ENCODE measurements at regions of chr3 and their contacts with region 1.

Region 1: DNA sequence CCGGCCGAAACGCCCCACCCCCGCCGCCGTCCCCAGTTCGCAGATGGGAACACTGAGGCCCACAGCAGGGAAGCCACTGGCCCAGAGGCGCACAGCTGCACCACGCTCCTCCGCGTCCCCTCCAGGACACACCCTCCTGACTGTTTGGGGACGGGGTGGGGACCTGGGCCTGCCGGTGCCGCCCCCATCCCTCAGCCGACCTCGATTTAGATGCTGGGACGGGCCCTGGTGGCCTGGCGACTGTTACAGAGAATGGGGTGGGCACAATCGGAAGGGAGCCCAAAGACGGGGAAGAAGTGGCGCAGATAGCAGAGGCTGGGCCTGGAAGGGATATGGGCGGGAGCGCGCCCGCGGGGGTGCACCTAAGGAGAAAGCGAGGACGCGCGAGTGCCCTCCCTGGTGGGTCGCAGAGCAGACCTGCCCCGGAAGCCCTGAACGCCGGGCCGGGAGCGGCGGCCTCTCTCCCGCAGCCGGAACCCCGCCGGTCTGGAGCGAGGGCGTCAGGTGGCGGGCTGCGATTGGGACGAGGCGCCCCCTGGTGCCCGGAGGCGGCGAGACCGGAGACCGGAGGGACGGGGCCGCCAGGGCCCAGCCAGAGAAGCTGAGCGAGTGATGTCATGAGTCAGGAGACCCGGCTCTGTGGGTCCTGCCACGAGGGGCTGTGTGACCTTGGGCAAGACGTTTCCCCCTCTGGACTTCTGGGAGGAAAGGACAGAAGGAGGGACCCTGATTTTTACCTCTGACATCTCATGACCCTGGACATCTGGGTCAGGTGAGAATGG is 78.4 kb downstream of the IQSEC1 start:
- DNase-seq: peak; percentile 89
- ATAC-seq: peak; percentile 74
- H3K4me3 ChIP-seq: peak overlapping the region; percentile 84
- H3K27ac ChIP-seq: peak overlapping the region; percentile 21; the same call in 1 of the 2 replicates
- H3K4me1 ChIP-seq: peaks cover 28% of the 10 kb centered on the region
- H3K27me3 ChIP-seq: no peaks in the 10 kb centered on the region
- CTCF ChIP-seq: peak; percentile 92

Region 2: GRCh38 chr3:12868039-12869034 is 126.5 kb before region 1 on chr3:
- CTCF ChIA-PET with region 1: no interaction called
- POLR2A ChIA-PET with region 1: no interaction called
- intact Hi-C with region 1: loop called (anchors 1 kb)
- DNase-seq: peak; percentile 93
- ATAC-seq: peak; percentile 99
- H3K4me3 ChIP-seq: no peak overlapping the region
- H3K27ac ChIP-seq: no peak overlapping the region
- H3K4me1 ChIP-seq: no peaks in the 10 kb centered on the region
- H3K27me3 ChIP-seq: no peaks in the 10 kb centered on the region
- CTCF ChIP-seq: peak; percentile 82

Region 3: DNA sequence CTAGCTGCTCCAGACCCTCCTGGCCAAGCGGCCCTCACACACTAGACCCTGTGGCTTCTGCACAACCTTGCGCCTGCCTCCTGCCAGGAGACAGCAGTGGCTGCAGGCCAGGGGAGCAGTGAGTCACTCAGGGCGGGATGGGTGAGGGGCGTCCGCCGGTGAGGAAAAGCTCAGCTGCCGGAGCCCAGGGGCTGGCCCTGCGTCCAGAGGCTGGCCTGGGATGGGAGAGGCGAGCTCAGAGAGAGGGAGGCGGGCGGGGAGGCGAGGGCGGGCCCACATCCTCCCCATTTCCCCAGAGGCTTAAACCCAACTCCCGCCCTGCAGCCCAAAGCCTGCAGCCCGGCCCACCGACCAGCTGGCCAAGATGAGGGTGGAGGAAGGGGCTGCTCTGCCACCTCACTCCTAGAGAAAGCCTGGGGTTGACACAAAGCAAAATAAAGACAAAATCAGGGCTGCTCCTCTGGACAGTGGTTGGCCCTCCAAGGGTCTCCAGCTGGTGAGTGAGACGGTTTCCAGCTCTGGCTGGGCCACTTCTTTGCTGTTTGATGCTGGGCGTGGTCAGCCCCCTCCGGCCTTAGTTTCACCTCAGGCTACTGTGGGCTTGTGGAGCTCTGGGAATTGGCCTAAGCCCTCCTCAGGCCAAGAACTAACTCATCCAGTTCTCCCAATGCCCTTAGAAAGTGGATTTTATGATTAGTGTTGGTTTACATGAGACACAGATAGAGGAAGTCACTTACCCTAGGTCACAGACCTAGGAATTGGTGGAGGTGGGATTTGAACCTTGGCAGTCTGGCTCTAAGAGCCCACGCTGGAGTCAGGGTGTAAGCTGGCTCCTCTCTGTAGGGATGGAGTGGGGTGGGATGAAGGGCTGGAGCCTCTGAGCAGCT is 27.8 kb after region 1 on chr3:
- CTCF ChIA-PET with region 1: no interaction called
- POLR2A ChIA-PET with region 1: interaction called, 10 read pairs
- intact Hi-C with region 1: no loop called
- DNase-seq: peak; percentile 75
- ATAC-seq: peak; percentile 74
- H3K4me3 ChIP-seq: no peak overlapping the region
- H3K27ac ChIP-seq: peak overlapping the region; percentile 41
- H3K4me1 ChIP-seq: peaks cover 32% of the 10 kb centered on the region
- H3K27me3 ChIP-seq: no peaks in the 10 kb centered on the region
- CTCF ChIP-seq: no peak

Measured in PC-3 (cell line).